Activated naive CD4-positive, alpha-beta T cell treated with anti-CD3 and anti-CD28 coated beads, Interleukin-2, amount 10 ng/mL, durations not matched to agents 7 days and 5 days (primary cell): ENCODE measurements at regions of chr1 and their contacts with region 1.

Region 1: DNA sequence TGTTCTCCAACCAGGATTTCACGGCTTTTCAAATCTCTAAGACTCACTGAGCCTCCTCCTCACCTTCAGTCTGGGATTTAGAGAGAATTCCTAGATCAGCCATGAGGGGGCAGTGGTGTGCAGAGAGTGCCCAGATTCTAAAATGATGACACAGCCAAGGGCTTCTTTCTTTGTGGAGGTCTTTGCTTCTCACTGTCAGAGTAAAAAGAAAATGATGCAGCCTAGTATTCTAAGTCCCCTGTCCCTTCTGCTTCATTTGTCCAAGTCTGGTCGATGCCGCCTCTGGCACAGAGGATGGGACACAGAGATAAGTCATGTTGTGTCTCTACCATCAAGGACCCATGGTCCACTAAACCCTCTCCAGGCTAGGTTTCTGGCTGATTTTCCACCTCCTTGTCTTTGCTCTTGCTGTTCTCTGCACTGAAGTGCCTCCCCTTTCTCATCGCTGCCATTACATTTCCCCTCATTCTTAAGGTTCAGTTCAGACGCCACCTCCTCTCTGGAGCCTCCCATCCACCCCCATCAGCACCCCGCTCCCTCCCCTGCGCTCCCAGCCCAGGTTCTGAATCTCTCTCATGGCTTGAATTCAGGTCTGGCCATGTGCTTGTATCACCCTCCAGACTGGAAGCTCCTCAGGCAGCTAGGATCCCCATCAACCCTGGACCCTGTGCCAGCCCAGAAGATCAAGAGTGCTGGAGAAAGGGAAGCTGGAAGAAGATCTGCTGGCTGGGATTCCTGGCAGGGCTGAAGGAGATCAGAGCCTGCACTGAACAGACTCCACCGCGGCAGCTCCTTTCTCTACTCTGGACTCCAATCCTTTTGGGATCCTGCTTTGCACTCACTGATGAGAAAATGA is 12.0 kb upstream of the TINAGL1 start:
- DNase-seq: peak; percentile 65
- H3K4me3 Mint-ChIP-seq: no peak overlapping the region
- H3K27ac Mint-ChIP-seq: no peak overlapping the region
- H3K4me1 Mint-ChIP-seq: no peaks in the 10 kb centered on the region
- H3K27me3 Mint-ChIP-seq: peaks cover 38% of the 10 kb centered on the region

Region 2: GRCh38 chr1:31434171-31434871 is 130.0 kb before region 1 on chr1:
- CTCF ChIA-PET with region 1: no interaction called
- DNase-seq: no peak
- H3K4me3 Mint-ChIP-seq: no peak overlapping the region
- H3K27ac Mint-ChIP-seq: no peak overlapping the region
- H3K4me1 Mint-ChIP-seq: no peaks in the 10 kb centered on the region
- H3K27me3 Mint-ChIP-seq: peaks cover 7% of the 10 kb centered on the region

Region 3: DNA sequence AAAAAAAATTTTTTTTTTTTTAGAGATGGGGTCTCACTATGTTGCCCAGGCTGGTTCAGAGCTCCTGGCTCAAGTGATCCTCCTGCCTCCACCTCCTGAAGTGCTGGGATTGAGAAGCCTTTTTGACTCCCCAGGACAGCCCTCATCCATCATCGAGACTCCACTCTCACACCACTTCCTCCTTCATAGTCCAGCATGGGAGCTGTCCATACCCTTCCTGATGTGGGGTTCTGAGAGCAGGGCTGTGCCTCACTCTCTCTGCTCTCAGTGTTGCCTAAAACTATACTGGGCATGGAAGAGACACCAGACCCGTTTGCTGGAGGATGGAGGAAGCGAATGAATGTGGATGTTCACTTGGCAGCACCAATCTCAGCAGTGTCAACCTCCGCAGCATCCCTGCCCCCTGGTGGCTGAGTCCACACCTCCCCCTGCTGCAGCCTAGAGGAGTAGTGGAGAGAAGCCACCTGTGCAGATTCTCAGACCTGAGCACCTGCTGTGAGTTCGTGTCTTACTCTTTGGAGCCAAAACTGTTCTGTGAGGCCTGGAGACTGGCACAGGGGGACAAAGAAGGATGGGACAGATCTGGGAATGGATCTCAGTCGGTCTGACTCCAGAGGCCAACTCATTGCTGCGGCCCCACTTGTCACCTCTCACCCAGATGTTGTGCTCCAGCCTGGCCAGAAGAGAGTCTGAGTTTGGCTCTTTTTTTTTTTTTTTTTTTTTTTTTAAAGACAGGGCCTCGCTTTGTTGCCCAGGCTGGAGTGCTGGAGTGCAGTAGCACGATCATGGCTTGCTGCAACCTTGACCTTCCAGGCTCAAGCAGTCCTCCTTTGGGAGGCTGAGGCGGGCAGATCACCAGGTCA is 29.6 kb after region 1 on chr1:
- CTCF ChIA-PET with region 1: interaction called, 11 read pairs
- DNase-seq: peak; percentile 81
- H3K4me3 Mint-ChIP-seq: no peak overlapping the region
- H3K27ac Mint-ChIP-seq: no peak overlapping the region
- H3K4me1 Mint-ChIP-seq: no peaks in the 10 kb centered on the region
- H3K27me3 Mint-ChIP-seq: peaks cover 42% of the 10 kb centered on the region